GM10248 (cell line): ENCODE measurements at regions of chr7 and their contacts with region 1.

Region 1: GRCh38 chr7:158646766-158647447 is 57.7 kb downstream of the NCAPG2 start:
- DNase-seq: no peak
- CTCF ChIP-seq: peak; percentile 52

Region 2: GRCh38 chr7:158111049-158111798 is 535.7 kb before region 1 on chr7:
- CTCF ChIA-PET with region 1: no interaction called
- POLR2A ChIA-PET with region 1: no interaction called
- DNase-seq: no peak
- CTCF ChIP-seq: no peak

Region 3: DNA sequence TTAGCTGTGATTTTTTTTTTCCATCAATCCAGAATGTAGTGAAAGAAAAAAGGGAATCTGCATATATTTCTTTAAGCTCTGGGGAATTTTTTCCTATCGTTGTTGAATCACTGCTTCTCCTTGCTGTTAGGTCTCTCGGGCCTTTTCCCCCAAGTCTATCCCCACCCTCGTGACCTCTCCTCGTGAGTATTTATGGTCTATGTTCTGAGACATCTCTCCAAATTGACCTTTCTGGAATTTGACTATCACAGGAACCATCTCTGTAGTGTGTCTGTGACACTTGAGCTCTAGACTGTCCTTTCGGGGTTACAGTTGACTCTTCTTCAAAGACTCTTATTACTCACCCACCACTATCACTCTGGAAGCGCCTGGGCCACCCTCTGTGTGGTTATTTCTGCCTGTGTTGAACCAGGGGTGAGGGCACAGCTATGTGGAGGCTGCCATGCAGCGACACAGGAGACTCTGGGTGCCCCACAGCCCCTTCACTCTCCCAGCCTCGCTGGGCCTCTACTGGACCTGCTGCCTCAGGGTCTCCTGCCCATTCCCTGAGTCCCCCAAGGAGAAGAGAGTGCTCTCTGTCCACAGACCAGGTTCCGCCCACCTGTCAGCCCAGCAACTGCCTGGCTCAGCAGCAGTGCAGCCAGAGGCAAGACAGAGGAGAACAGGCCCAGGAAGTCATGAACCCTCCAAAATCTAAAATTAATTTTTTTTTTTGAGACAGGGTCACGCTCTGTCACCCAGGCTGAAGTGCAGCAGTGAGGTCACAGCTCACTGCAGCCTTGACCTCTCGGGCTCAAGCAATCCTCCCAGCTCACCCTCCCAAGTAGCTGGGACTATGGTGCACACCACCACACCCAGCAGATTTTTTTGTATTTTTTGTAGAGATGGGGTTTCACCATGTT is 13.6 kb before region 1 on chr7:
- CTCF ChIA-PET with region 1: interaction called, 13 read pairs
- POLR2A ChIA-PET with region 1: no interaction called
- DNase-seq: peak; percentile 27
- CTCF ChIP-seq: no peak

Region 4: DNA sequence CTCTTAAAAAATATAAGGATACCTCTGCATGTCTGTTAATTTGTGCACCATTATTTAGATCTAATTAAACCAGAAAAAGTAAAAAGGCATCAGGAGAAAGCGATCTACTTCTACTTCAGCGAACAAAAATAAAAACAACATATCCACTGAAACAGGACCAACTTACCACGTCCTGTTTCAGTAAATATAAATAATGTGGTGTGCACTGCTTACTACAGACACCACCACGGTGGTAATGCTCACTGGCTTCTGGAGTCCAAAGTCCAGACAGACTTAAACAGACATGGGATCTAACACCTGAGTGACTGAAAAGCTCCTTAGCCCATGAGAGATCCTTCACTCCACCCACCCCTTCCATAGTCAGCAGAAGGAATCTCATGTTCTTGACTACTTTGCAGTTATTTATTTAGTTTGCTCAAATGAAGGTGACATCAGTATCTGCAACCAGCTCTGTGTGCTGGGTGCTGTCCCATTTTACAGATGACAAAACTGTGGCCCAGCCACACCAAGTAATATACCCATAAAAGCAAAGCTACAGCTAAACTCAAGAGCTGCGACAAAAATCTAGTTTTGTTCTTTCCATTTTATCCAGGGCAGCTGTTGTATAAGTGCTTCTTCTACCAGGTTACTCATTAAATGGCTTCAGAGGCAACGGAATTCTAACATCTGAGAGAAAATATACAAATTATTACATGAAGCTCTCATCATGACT is 119.8 kb after region 1 on chr7:
- CTCF ChIA-PET with region 1: no interaction called
- POLR2A ChIA-PET with region 1: no interaction called
- DNase-seq: no peak
- CTCF ChIP-seq: no peak